PC-9 (cell line): ENCODE measurements at regions of chr15 and their contacts with region 1.

Region 1: DNA sequence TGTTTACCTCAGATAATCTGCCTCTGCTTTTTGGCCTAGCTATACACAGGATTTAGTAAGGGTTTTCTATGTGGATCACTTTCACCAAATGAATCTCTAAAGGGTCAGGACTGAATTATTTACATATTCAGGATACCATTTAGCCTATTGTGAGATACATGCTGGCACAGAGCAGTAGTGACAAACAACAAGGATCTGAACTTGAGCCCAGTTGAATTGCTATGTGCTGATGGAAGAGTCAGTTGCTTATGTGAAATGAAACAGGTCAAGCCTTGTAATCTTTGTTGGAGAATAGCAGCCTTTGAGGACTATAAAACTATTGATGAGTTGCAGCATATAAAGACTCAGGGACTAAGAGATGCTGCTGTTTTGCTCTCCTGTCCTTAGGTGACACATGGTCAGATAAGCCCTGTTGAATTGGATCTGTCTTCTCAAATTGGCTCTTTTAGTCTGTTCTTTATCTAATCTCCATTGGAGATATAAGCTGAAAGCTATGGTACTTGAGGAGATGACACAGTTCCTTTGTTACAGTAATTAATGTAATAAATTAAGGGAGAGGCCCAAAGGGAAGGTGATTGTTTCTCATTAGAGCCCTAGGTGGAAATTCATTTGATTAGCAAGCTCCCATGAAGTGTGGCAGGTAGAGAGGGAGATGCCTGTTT is 30.4 kb downstream of the ZNF609 start:
- DNase-seq: no peak
- H3K4me3 ChIP-seq: no peak overlapping the region
- H3K27ac ChIP-seq: no peak overlapping the region
- H3K4me1 ChIP-seq: no peaks in the 10 kb centered on the region
- H3K27me3 ChIP-seq: no peaks in the 10 kb centered on the region
- CTCF ChIP-seq: no peak

Region 2: DNA sequence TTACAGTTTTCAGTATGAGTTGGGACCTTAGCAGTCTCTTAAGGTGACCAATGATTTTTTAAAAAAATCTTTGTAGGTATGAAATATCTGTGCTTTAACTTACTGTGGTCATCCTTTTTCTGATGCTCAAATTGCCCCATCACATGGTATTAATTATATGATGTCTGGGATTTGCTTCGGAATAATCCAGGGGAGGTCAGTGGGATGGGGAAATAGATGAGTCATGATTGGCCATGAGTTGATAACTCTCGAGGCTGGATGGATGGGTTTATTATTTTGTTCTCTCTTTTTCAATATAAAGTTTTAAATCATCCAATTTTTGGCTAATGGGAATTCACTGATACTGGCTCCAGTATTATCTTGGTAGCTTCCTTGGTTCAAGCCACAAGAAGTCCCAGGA is 1818.5 kb before region 1 on chr15:
- CTCF ChIA-PET with region 1: no interaction called
- POLR2A ChIA-PET with region 1: no interaction called
- intact Hi-C with region 1: no loop called
- DNase-seq: no peak
- H3K4me3 ChIP-seq: no peak overlapping the region
- H3K27ac ChIP-seq: no peak overlapping the region
- H3K4me1 ChIP-seq: no peaks in the 10 kb centered on the region
- H3K27me3 ChIP-seq: no peaks in the 10 kb centered on the region
- CTCF ChIP-seq: no peak

Region 3: GRCh38 chr15:64507293-64507802 is 16.6 kb after region 1 on chr15:
- CTCF ChIA-PET with region 1: interaction called, 11 read pairs
- POLR2A ChIA-PET with region 1: no interaction called
- intact Hi-C with region 1: no loop called
- DNase-seq: peak; percentile 21 to 53
- H3K4me3 ChIP-seq: no peak overlapping the region
- H3K27ac ChIP-seq: no peak overlapping the region
- H3K4me1 ChIP-seq: no peaks in the 10 kb centered on the region
- H3K27me3 ChIP-seq: no peaks in the 10 kb centered on the region
- CTCF ChIP-seq: no peak